ENCODE measurements at regions of chr10 and their contacts with region 1.

Region 1: DNA sequence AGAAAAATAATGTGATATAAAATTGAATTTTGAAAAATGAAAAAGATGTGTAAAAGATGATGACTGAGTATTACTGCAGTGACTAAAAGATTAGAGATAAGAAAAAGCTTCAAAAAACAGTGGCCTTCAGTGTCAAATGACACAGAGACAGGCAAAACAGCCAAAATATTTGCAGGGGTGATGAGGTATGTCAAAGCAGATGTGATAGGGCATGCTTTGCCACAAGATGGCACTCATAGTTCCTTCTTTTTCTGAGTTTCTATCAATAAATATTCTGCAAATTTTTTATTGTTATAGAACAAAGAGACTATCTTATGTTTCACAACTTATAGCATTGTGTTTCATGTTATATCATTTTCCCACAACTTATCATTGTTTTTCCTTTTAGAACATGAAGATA is 344.1 kb upstream of the HPS1 start:
- DNase-seq: no peak
- ATAC-seq: no peak
- H3K4me3 Mint-ChIP-seq: no peak overlapping the region
- H3K27ac Mint-ChIP-seq: no peak overlapping the region
- H3K4me1 Mint-ChIP-seq: no peaks in the 10 kb centered on the region
- H3K27me3 Mint-ChIP-seq: peaks cover 2% of the 10 kb centered on the region

Region 2: DNA sequence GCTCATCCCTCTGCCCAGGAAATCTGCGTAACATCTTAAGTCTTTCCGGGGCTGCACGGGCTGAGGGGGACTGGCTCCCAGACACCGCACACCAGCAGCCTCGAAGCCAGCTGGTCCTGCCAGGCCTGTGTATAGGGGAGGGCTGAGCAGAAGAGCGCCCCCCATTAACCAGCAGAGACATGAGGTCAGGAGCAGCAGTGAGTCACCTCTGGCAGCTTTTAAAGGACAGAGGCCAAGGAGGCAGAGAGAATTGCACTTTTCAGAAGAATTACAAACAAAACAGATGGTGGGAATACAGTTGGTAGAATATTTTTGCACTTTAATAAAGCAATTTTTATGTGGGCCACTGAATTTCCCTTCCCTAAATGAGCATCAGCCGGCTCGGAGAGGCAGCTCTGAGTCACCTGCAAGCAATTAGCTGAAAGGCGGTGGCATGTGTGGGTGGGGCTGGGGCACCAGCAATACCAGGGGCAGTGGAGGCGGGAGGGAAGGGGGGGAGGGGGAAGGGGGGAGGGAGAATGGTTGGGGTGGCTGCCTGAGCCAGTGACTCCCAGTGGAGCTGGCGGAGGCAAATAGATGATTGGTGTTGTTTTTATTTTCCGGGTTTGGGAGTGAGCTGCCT is 902.0 kb before region 1 on chr10:
- CTCF ChIA-PET with region 1: no interaction called
- POLR2A ChIA-PET with region 1: no interaction called
- intact Hi-C with region 1: no loop called
- DNase-seq: peak; percentile 52
- ATAC-seq: peak; percentile 30
- H3K4me3 Mint-ChIP-seq: no peak overlapping the region
- H3K27ac Mint-ChIP-seq: no peak overlapping the region
- H3K4me1 Mint-ChIP-seq: no peaks in the 10 kb centered on the region
- H3K27me3 Mint-ChIP-seq: peaks cover 5% of the 10 kb centered on the region

Region 3: DNA sequence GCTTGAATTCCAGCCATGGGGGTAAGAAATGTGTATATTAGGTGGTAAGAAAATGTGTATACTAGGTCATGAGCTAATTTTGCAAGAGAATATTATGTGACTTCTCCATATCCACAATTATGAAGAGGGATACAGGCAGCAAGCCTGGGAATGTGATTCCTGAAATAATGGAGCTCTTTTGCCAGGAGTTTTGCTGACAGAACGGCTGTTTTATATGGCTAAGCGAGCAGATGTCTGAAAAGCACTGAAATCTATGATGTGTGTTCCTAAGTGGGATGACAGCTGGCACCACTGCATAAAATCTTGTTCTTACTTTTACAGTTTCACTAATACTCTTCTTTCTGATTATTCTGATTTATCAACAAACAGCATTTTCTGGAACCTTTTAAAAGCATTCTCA is 41.9 kb after region 1 on chr10:
- CTCF ChIA-PET with region 1: no interaction called
- POLR2A ChIA-PET with region 1: no interaction called
- intact Hi-C with region 1: no loop called
- DNase-seq: no peak
- ATAC-seq: no peak
- H3K4me3 Mint-ChIP-seq: no peak overlapping the region
- H3K27ac Mint-ChIP-seq: no peak overlapping the region
- H3K4me1 Mint-ChIP-seq: no peaks in the 10 kb centered on the region
- H3K27me3 Mint-ChIP-seq: no peaks in the 10 kb centered on the region

Region 4: DNA sequence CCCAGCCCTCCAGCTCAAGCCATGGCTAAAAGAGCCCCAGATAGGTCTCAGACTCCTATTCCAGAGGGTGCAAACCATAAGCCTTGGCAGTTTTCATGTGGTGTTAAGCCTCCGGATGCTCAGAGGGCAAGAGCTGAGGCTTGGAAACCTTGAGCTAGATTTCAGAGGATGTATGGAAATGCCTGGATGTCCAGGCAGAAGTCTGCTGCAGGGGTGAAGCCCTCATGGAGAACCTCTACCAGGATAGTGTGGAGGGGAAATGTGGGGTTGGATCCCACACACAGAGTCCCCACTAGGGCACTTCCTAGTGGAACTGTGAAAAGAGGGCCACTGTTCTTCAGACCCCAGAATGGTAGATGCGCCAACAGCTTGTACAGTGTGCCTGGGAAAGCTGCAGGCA is 458.0 kb after region 1 on chr10:
- CTCF ChIA-PET with region 1: interaction called, 3 read pairs
- POLR2A ChIA-PET with region 1: no interaction called
- intact Hi-C with region 1: loop called (anchors 5 kb)
- DNase-seq: no peak
- ATAC-seq: no peak
- H3K4me3 Mint-ChIP-seq: no peak overlapping the region
- H3K27ac Mint-ChIP-seq: no peak overlapping the region
- H3K4me1 Mint-ChIP-seq: no peaks in the 10 kb centered on the region
- H3K27me3 Mint-ChIP-seq: peaks cover 31% of the 10 kb centered on the region